AG04449 (cell line): ENCODE measurements at regions of chr1 and their contacts with region 1.

Region 1: DNA sequence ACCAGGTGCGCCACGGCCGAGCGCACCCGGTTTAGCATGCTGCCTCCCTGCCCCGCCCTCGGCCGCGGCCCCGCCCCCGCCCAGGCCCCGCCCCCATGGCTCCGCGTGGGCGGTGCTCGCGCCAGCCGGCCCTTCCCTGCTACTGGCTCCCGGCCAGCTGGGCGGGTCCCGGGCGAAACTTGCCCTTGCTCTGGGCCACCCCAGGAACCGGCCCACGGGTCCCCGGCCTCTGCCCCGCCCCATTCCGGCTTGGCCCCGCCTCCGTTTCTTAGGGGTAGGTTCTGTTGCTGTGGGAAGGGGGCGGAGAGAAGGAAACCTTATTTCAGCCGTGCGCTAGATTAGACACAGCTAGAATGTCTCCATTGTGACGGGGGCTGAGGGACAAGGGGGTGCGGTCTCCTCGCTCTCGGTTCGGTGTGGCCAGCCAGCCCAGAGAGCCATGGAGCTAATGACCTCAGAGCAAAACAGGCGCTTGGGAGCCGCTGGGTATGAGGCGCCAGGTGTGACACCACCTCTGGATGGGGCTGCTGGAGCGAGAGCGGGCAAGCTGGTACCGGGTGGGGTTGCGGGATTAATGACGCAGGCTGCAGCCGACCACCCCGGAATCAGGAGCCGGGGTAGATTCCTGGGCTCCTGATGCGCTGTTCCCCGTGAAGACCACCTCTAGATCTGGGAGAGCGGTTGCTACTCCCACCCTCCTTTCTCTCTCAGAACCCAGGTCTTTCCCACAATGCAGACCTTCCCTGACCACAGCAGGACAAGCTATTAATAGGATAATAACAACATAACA is at the start of gene PPM1J:
- DNase-seq: no peak
- H3K4me3 ChIP-seq: peak within 1 kb of the TSS; percentile 68
- CTCF ChIP-seq: no peak

Region 2: GRCh38 chr1:112674439-112674985 is 40.9 kb before region 1 on chr1 and contains the start of gene MOV10:
- CTCF ChIA-PET with region 1: interaction called, 10 read pairs
- POLR2A ChIA-PET with region 1: no interaction called
- DNase-seq: no peak
- H3K4me3 ChIP-seq: peak within 1 kb of the TSS; percentile 87
- CTCF ChIP-seq: no peak

Region 3: GRCh38 chr1:112744009-112744578 is 28.6 kb after region 1 on chr1:
- CTCF ChIA-PET with region 1: interaction called, 264 read pairs
- POLR2A ChIA-PET with region 1: no interaction called
- DNase-seq: no peak
- H3K4me3 ChIP-seq: peak overlapping the region; percentile 37
- CTCF ChIP-seq: peak; percentile 77

Region 4: DNA sequence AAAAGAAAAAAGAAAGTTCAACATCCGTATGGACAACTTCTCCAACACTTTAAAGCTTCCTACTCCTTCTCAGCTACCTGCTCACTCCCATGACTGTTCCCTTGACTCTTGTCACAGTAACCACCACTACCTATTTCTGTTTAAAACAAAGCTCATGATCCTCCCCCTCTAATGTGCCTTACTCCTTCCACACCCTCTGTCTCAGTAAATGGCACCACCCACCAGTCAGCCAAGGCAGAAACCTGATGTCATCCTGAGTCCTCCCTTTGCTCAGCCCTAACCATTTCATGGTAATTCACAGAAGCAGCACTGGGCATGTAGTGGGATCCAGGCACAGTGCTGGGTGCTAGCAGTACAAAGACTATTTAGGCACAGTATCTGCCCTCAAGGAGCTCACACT is 62.7 kb after region 1 on chr1:
- CTCF ChIA-PET with region 1: interaction called, 19 read pairs
- POLR2A ChIA-PET with region 1: no interaction called
- DNase-seq: no peak
- H3K4me3 ChIP-seq: no peak overlapping the region
- CTCF ChIP-seq: no peak

Region 5: DNA sequence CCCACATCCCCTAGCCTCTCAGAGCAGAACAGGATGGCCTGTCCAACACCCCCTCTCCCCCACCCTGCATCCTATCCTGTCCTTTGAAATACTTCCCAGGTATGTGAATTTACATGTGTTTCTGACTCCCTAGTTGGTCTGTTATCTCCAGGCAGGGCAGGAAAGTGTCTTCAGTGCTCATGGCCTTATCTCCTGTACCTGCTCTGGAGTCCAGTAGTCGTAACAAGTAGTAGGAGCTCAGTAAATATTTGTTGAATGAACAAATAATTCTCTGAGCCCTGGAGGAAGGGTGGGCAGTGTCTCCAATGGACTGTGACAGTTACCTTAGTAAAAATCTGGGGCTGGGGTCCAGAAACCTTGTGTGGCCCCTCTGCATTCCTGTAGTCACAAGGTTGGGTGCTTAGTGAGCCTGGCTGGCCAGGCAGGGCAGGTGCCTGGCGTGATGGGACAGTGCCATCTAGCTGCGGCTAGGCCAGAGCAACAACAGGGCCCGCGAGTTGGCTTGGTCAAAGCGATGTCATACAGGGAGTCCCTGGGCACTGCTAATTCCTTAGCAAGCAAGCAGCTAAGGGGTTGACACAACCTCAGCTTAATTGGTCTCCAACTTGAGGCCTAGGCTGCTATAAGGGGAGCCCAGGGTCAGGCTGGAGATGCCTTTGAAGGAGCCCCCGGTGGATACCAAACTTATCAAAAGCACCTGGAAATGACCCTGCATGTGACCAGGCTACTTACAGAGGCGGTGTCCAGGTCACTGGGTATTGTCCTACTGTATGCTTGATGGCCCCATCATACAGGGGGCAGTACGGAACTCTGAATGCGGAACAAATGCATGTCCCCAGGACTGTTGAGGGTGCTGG is 88.7 kb after region 1 on chr1:
- CTCF ChIA-PET with region 1: interaction called, 1,029 read pairs
- POLR2A ChIA-PET with region 1: interaction called, 3 read pairs
- DNase-seq: no peak
- H3K4me3 ChIP-seq: no peak overlapping the region
- CTCF ChIP-seq: peak; percentile 89

Region 6: GRCh38 chr1:112836642-112837041 is 121.2 kb after region 1 on chr1:
- CTCF ChIA-PET with region 1: interaction called, 12 read pairs
- POLR2A ChIA-PET with region 1: no interaction called
- DNase-seq: no peak
- H3K4me3 ChIP-seq: no peak overlapping the region
- CTCF ChIP-seq: no peak